ENCODE measurements at regions of chr2 and their contacts with region 1.

Region 1: DNA sequence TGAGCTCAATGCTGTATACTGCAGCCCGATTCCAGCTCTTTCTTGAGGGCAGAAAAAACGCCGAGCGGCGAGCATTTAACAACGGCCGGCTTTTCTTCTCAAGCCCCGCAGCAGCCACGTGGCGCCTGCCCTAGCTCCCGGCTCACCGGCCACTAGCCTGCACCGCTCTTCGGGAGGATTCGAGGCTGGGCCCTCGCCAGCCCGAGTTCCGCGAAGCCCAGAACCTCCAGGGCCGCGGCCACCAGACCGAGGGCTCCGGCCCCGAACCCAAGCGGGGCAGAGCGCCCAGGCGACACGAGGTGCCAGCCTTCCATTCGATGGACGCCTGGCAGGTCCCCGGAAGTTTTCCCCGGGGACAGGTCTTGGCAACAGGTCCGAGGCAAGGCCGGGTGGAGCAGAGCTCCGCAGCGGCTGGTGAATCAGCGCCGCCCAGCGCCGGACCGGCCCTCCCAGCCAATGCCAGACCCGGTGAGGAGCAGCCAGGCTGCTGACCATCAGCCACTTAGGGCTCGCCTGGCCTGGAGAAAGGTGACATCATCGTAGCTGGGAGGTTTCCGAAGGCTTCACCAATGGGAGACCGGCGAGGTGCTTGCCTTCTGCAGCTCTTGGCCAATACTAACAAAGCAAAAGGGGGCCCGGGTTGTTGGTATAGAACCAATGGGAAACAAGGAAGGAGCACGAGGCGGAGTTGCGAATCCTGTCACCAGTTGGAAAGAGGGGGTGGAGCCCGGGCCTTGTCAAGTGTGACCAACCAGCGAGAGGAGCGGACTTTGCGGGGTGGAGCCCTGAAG is 544 bp upstream of the MXD1 start:
- DNase-seq: peak; percentile 100
- ATAC-seq: peak; percentile 89
- H3K4me3 ChIP-seq: peak overlapping the region; percentile 63 to 94 (median 80)
- H3K4me3 Mint-ChIP-seq: peak overlapping the region; percentile 82
- H3K27ac ChIP-seq: peak overlapping the region; percentile 93 to 97
- H3K27ac Mint-ChIP-seq: peak overlapping the region; percentile 79
- H3K4me1 ChIP-seq: peaks cover 18% of the 10 kb centered on the region in 2 donors
- H3K4me1 Mint-ChIP-seq: peaks cover 29% of the 10 kb centered on the region
- H3K27me3 ChIP-seq: no peaks in the 10 kb centered on the region
- H3K27me3 Mint-ChIP-seq: no peaks in the 10 kb centered on the region
- CTCF ChIP-seq: no peak

Region 2: GRCh38 chr2:69770193-69771146 is 143.9 kb before region 1 on chr2:
- CTCF ChIA-PET with region 1: no interaction called
- POLR2A ChIA-PET with region 1: no interaction called
- intact Hi-C with region 1: no loop called
- DNase-seq: no peak
- ATAC-seq: no peak
- H3K4me3 ChIP-seq: no peak overlapping the region
- H3K4me3 Mint-ChIP-seq: peak overlapping the region; percentile 8
- H3K27ac ChIP-seq: no peak overlapping the region
- H3K27ac Mint-ChIP-seq: peak overlapping the region; percentile 21
- H3K4me1 ChIP-seq: peaks cover 58 to 61% of the 10 kb centered on the region in 2 donors
- H3K4me1 Mint-ChIP-seq: peaks cover 58% of the 10 kb centered on the region
- H3K27me3 ChIP-seq: no peaks in the 10 kb centered on the region
- H3K27me3 Mint-ChIP-seq: no peaks in the 10 kb centered on the region
- CTCF ChIP-seq: no peak

Region 3: GRCh38 chr2:69893684-69894551 is 20.4 kb before region 1 on chr2 and contains the start of gene SNRNP27:
- CTCF ChIA-PET with region 1: interaction called, 3 read pairs
- POLR2A ChIA-PET with region 1: interaction called, 8 read pairs
- intact Hi-C with region 1: loop called (anchors 2 kb)
- DNase-seq: peak; percentile 85
- ATAC-seq: peak; percentile 88
- H3K4me3 ChIP-seq: peak within 1 kb of the TSS; percentile 67 to 96 (median 84)
- H3K4me3 Mint-ChIP-seq: peak within 1 kb of the TSS; percentile 98
- H3K27ac ChIP-seq: peak within 1 kb of the TSS; percentile 57 to 88
- H3K27ac Mint-ChIP-seq: peak within 1 kb of the TSS; percentile 95
- H3K4me1 ChIP-seq: peaks cover 9 to 16% of the 10 kb centered on the region in 2 donors
- H3K4me1 Mint-ChIP-seq: peaks cover 33% of the 10 kb centered on the region
- H3K27me3 ChIP-seq: no peaks in the 10 kb centered on the region
- H3K27me3 Mint-ChIP-seq: no peaks in the 10 kb centered on the region
- CTCF ChIP-seq: no peak
- total RNA-seq, gene SNRNP27: 52.0 and 54.8 TPM in 2 replicates

Region 4: GRCh38 chr2:70070541-70071268 is 156.3 kb after region 1 on chr2:
- CTCF ChIA-PET with region 1: interaction called, 22 read pairs
- POLR2A ChIA-PET with region 1: interaction called, 17 read pairs
- intact Hi-C with region 1: loop called (anchors 1 kb)
- DNase-seq: peak; percentile 86
- ATAC-seq: peak; percentile 96
- H3K4me3 ChIP-seq: no peak overlapping the region
- H3K4me3 Mint-ChIP-seq: peak overlapping the region; percentile 63
- H3K27ac ChIP-seq: peak overlapping the region; percentile 57 to 79
- H3K27ac Mint-ChIP-seq: peak overlapping the region; percentile 88
- H3K4me1 ChIP-seq: peaks cover 32 to 33% of the 10 kb centered on the region in 2 donors
- H3K4me1 Mint-ChIP-seq: peaks cover 30% of the 10 kb centered on the region
- H3K27me3 ChIP-seq: no peaks in the 10 kb centered on the region
- H3K27me3 Mint-ChIP-seq: no peaks in the 10 kb centered on the region
- CTCF ChIP-seq: peak; percentile 79

Region 5: GRCh38 chr2:70086838-70087701 is 172.7 kb after region 1 on chr2 and contains the start of gene PCBP1:
- CTCF ChIA-PET with region 1: interaction called, 51 read pairs
- POLR2A ChIA-PET with region 1: interaction called, 60 read pairs
- intact Hi-C with region 1: loop called (anchors 1 kb)
- DNase-seq: peak; percentile 97
- ATAC-seq: peak; percentile 60
- H3K4me3 ChIP-seq: peak within 1 kb of the TSS; percentile 66 to 99 (median 98)
- H3K4me3 Mint-ChIP-seq: peak within 1 kb of the TSS; percentile 94
- H3K27ac ChIP-seq: peak within 1 kb of the TSS; percentile 97 to 100
- H3K27ac Mint-ChIP-seq: peak within 1 kb of the TSS; percentile 100
- H3K4me1 ChIP-seq: peaks cover 63 to 73% of the 10 kb centered on the region in 2 donors
- H3K4me1 Mint-ChIP-seq: peaks cover 74% of the 10 kb centered on the region
- H3K27me3 ChIP-seq: no peaks in the 10 kb centered on the region
- H3K27me3 Mint-ChIP-seq: no peaks in the 10 kb centered on the region
- CTCF ChIP-seq: no peak
- total RNA-seq, gene PCBP1: 304 and 327 TPM in 2 replicates

Region 6: DNA sequence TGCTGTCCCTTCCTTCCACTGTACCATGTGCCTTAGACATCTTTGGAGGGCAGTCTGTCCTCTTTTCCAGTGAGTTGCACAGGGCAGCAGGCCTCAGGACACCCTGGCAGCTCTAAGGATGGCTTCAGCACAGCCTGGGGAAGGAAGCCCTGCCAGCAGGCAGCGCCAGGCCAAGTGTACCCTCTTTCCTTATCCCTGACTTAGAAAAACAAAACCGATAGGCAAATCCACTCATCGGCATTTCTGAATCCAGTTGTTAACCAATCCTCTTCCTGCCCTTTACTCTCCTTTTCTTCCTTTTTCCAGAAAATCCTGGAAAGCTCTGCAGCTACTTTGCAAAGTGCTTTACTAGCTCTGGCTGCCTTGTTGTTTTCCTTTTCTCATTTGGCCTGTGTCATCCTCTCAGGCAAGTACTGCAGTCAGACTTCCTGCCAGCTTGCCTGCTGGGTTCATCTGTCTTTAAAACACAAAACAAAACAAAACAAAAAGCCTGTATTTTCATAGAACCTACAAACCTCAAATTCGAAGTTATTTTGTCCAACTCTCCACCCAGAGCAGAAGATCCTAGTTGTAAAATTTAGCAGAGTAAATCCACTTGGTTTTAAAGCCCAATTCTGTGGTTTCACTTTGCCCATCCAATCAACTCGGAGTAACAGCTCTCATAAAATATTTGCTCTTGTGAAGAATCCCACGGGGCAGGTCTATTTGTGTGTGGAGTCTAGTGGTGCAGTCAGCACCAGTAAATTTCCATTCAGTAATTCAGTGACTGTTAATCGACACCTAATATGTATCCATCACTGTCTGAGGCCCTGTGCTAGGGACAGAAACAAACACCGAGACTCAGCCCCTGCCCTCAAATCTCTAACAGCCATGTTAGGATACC is 218.1 kb after region 1 on chr2:
- CTCF ChIA-PET with region 1: interaction called, 24 read pairs
- POLR2A ChIA-PET with region 1: interaction called, 7 read pairs
- intact Hi-C with region 1: no loop called
- DNase-seq: peak; percentile 77
- ATAC-seq: peak; percentile 74
- H3K4me3 ChIP-seq: peak overlapping the region; percentile 35 to 62 (median 53)
- H3K4me3 Mint-ChIP-seq: peak overlapping the region; percentile 87
- H3K27ac ChIP-seq: peak overlapping the region; percentile 80 to 87
- H3K27ac Mint-ChIP-seq: peak overlapping the region; percentile 96
- H3K4me1 ChIP-seq: peaks cover 52 to 61% of the 10 kb centered on the region in 2 donors
- H3K4me1 Mint-ChIP-seq: peaks cover 59% of the 10 kb centered on the region
- H3K27me3 ChIP-seq: no peaks in the 10 kb centered on the region
- H3K27me3 Mint-ChIP-seq: no peaks in the 10 kb centered on the region
- CTCF ChIP-seq: no peak

Region 7: GRCh38 chr2:70190418-70191243 is 276.3 kb after region 1 on chr2 and contains the start of gene C2orf42:
- CTCF ChIA-PET with region 1: interaction called, 40 read pairs
- POLR2A ChIA-PET with region 1: interaction called, 20 read pairs
- intact Hi-C with region 1: loop called (anchors 1 kb)
- DNase-seq: peak; percentile 99
- ATAC-seq: peak; percentile 87
- H3K4me3 ChIP-seq: peak within 1 kb of the TSS; percentile 72 to 98 (median 80)
- H3K4me3 Mint-ChIP-seq: peak within 1 kb of the TSS; percentile 88
- H3K27ac ChIP-seq: peak within 1 kb of the TSS; percentile 98 to 99
- H3K27ac Mint-ChIP-seq: peak within 1 kb of the TSS; percentile 98
- H3K4me1 ChIP-seq: peaks cover 9 to 11% of the 10 kb centered on the region in 2 donors
- H3K4me1 Mint-ChIP-seq: peaks cover 18% of the 10 kb centered on the region
- H3K27me3 ChIP-seq: no peaks in the 10 kb centered on the region
- H3K27me3 Mint-ChIP-seq: no peaks in the 10 kb centered on the region
- CTCF ChIP-seq: no peak
- total RNA-seq, gene C2orf42: 42.9 and 45.2 TPM in 2 replicates

Region 8: GRCh38 chr2:70258532-70258874 is 344.1 kb after region 1 on chr2:
- CTCF ChIA-PET with region 1: interaction called, 22 read pairs
- POLR2A ChIA-PET with region 1: interaction called, 6 read pairs
- intact Hi-C with region 1: no loop called
- DNase-seq: no peak
- ATAC-seq: no peak
- H3K4me3 ChIP-seq: peak overlapping the region in 4 of 5 experiments; percentile 54 to 81 (median 70)
- H3K4me3 Mint-ChIP-seq: peak overlapping the region; percentile 97
- H3K27ac ChIP-seq: peak overlapping the region in 1 of 2 donors; percentile 14
- H3K27ac Mint-ChIP-seq: peak overlapping the region; percentile 90
- H3K4me1 ChIP-seq: peaks cover 6 to 12% of the 10 kb centered on the region in 2 donors
- H3K4me1 Mint-ChIP-seq: peaks cover 18% of the 10 kb centered on the region
- H3K27me3 ChIP-seq: no peaks in the 10 kb centered on the region
- H3K27me3 Mint-ChIP-seq: no peaks in the 10 kb centered on the region
- CTCF ChIP-seq: no peak